ENCODE measurements at regions of chr2 and their contacts with region 1.

Region 1: GRCh38 chr2:231563378-231563961 is 29.2 kb upstream of the TEX44 start:
- DNase-seq: no peak

Region 2: GRCh38 chr2:230296917-230297316 is 1266.6 kb before region 1 on chr2:
- intact Hi-C with region 1: no loop called
- DNase-seq: no peak

Region 3: DNA sequence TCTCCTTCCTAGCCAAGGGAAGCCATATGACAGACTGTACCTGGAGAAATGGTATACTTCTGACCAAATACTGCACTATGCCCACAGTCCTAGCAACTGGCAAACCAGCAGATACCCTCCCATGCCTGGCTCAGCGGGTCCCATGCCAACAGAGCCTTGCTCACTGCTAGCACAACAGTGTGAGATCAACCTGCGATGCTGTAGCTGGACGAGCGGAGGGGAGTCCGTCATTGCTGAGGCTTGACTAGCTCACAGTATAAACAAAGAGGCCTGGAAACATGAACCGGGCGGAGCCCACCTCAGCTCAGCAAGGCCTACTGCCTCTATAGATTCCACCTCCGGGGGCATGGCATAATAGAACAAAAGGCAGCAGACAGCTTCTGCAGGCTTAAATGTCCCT is 944.0 kb before region 1 on chr2:
- intact Hi-C with region 1: no loop called
- DNase-seq: no peak

Region 4: DNA sequence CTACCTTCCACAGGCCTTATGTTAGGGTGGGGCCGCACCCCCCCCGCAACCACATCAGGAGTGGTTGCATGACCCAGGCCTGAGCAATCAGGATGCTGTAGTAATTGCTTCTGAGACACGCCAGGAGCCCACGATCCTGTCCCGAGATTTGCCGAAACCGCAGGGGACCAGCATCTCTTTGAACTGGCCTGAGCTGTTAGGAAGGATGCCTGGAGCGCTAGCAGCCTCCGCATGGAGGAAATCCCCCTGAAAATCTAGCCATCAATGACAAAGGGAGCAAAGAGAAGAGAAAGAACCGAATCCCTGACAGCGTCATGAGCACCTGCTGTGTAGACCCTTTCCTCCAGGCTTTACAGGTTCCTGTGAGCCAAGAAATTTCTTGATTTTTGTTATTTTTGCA is 20.5 kb after region 1 on chr2:
- intact Hi-C with region 1: no loop called
- DNase-seq: no peak

Region 5: GRCh38 chr2:231597627-231598026 is 34.2 kb after region 1 on chr2:
- intact Hi-C with region 1: loop called (anchors 2 to 5 kb)
- DNase-seq: no peak